CD8-positive, alpha-beta T cell (primary cell): ENCODE measurements at regions of chr1 and their contacts with region 1.

Region 1: GRCh38 chr1:157090196-157090647 is 9.4 kb downstream of the ETV3L start:
- DNase-seq: peak; percentile 75 to 94 (median 85)
- ATAC-seq: peak; percentile 78
- H3K4me3 ChIP-seq: no peak overlapping the region
- H3K4me3 Mint-ChIP-seq: no peak overlapping the region
- H3K27ac ChIP-seq: no peak overlapping the region
- H3K27ac Mint-ChIP-seq: no peak overlapping the region
- H3K4me1 ChIP-seq: peaks cover 5% of the 10 kb centered on the region
- H3K4me1 Mint-ChIP-seq: no peaks in the 10 kb centered on the region
- H3K27me3 ChIP-seq: no peaks in the 10 kb centered on the region
- H3K27me3 Mint-ChIP-seq: peaks cover 2% of the 10 kb centered on the region
- CTCF ChIP-seq: peak; percentile 87

Region 2: DNA sequence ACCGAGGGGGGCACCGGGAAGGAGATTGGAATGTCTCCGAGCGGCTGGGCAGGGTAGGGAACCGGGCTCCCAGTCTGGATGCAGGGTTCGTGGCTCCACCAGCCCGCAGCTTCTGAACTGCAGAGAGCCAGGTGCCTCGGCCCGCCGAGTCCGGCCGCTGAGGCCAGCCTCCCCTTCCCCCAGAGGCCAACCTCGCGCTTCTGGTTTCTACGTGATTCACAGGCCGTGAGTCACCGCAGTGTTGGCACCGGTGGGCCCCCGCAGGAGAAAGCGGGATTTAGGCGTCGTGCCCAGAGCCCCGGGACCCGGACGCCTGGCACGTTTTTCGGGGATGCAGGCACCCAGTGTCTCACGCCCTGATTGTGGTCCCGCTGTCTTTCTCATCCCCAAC is 385.3 kb before region 1 on chr1:
- CTCF ChIA-PET with region 1: no interaction called
- POLR2A ChIA-PET with region 1: no interaction called
- intact Hi-C with region 1: no loop called
- DNase-seq: peak in 4 of 9 experiments; percentile 23 to 45 (median 37)
- ATAC-seq: no peak
- H3K4me3 ChIP-seq: peak overlapping the region; percentile 52 to 89
- H3K4me3 Mint-ChIP-seq: peak overlapping the region; percentile 89
- H3K27ac ChIP-seq: no peak overlapping the region
- H3K27ac Mint-ChIP-seq: no peak overlapping the region
- H3K4me1 ChIP-seq: peaks cover 41% of the 10 kb centered on the region
- H3K4me1 Mint-ChIP-seq: peaks cover 37% of the 10 kb centered on the region
- H3K27me3 ChIP-seq: peaks cover 8 to 24% of the 10 kb centered on the region in 2 experiments
- H3K27me3 Mint-ChIP-seq: peaks cover 13% of the 10 kb centered on the region
- CTCF ChIP-seq: no peak

Region 3: DNA sequence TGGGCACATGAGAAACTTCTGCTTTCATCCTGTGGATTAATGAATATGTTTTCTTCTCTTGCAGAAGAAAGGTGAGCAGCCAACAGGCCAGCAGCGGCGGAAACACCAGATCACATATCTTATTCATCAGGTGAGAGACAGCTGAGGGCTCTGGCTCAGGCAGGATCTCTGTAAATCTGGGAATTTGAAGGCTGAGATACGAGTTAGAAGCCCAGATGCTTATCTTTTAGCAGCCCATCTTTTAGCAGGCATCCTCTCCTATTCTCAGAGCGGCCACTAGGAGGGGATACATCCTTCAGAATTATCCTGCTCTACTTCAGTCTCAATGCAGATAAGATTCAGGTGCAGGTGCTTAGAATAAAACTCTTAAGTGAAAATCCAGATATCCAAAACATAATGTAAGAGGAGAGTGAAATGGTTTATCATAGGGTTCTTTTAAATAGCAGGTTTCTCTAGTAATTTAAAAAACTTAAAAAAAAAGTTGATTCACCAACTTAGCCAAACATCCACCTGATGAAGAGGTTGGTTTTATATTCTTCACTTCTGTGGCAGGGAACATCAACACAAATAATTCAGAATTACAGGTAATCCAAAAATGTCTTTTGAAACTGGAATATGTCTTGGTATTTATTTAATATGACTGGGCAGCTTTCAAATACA is 292.9 kb before region 1 on chr1:
- CTCF ChIA-PET with region 1: no interaction called
- POLR2A ChIA-PET with region 1: no interaction called
- intact Hi-C with region 1: no loop called
- DNase-seq: peak in 7 of 9 experiments; percentile 48 to 84 (median 68)
- ATAC-seq: peak; percentile 91
- H3K4me3 ChIP-seq: no peak overlapping the region
- H3K4me3 Mint-ChIP-seq: no peak overlapping the region
- H3K27ac ChIP-seq: no peak overlapping the region
- H3K27ac Mint-ChIP-seq: no peak overlapping the region
- H3K4me1 ChIP-seq: no peaks in the 10 kb centered on the region
- H3K4me1 Mint-ChIP-seq: peaks cover 8% of the 10 kb centered on the region
- H3K27me3 ChIP-seq: no peaks in the 10 kb centered on the region
- H3K27me3 Mint-ChIP-seq: no peaks in the 10 kb centered on the region
- CTCF ChIP-seq: peak; percentile 87

Region 4: DNA sequence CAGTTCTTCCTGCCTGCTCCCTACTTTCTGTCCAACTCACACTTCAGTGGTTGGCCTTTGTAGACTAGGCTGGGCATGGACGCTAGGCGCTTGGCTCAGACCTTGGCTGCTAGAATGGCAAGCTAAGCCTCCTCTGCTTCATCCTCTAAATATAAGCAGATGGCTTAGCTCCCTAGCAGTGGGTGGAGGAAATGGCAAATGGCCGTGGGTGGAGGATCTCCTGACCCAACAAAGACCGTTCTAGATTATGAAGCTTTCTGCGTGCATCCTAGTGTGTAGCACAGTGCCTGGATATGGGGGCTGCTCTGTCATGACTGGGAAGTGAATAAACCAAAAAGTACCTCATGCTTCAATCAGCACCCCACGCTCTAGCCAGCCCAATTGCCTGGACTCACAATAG is 19.8 kb after region 1 on chr1:
- CTCF ChIA-PET with region 1: interaction called, 20 read pairs
- POLR2A ChIA-PET with region 1: no interaction called
- intact Hi-C with region 1: no loop called
- DNase-seq: no peak
- ATAC-seq: no peak
- H3K4me3 ChIP-seq: no peak overlapping the region
- H3K4me3 Mint-ChIP-seq: no peak overlapping the region
- H3K27ac ChIP-seq: no peak overlapping the region
- H3K27ac Mint-ChIP-seq: no peak overlapping the region
- H3K4me1 ChIP-seq: no peaks in the 10 kb centered on the region
- H3K4me1 Mint-ChIP-seq: no peaks in the 10 kb centered on the region
- H3K27me3 ChIP-seq: peaks cover 3 to 6% of the 10 kb centered on the region in 2 experiments
- H3K27me3 Mint-ChIP-seq: peaks cover 38% of the 10 kb centered on the region
- CTCF ChIP-seq: no peak

Region 5: GRCh38 chr1:157138220-157139051 is 48.2 kb after region 1 on chr1 and contains the start of gene ETV3:
- CTCF ChIA-PET with region 1: interaction called, 32 read pairs
- POLR2A ChIA-PET with region 1: no interaction called
- intact Hi-C with region 1: no loop called
- DNase-seq: peak; percentile 73 to 96 (median 87)
- ATAC-seq: peak; percentile 77
- H3K4me3 ChIP-seq: peak within 1 kb of the TSS; percentile 85 to 93
- H3K4me3 Mint-ChIP-seq: peak within 1 kb of the TSS; percentile 94
- H3K27ac ChIP-seq: peak within 1 kb of the TSS; percentile 84 to 97
- H3K27ac Mint-ChIP-seq: peak within 1 kb of the TSS; percentile 95
- H3K4me1 ChIP-seq: peaks cover 52% of the 10 kb centered on the region
- H3K4me1 Mint-ChIP-seq: peaks cover 54% of the 10 kb centered on the region
- H3K27me3 ChIP-seq: no peaks in the 10 kb centered on the region
- H3K27me3 Mint-ChIP-seq: no peaks in the 10 kb centered on the region
- CTCF ChIP-seq: no peak
- total RNA-seq, gene ETV3: 88.9 to 94.0 TPM

Region 6: GRCh38 chr1:157156058-157156541 is 65.9 kb after region 1 on chr1:
- CTCF ChIA-PET with region 1: interaction called, 582 read pairs
- POLR2A ChIA-PET with region 1: interaction called, 11 read pairs
- intact Hi-C with region 1: loop called in 1 of 2 experiments (anchors 1 kb)
- DNase-seq: peak; percentile 58 to 88 (median 77)
- ATAC-seq: peak; percentile 59
- H3K4me3 ChIP-seq: no peak overlapping the region
- H3K4me3 Mint-ChIP-seq: peak overlapping the region; percentile 46
- H3K27ac ChIP-seq: no peak overlapping the region
- H3K27ac Mint-ChIP-seq: peak overlapping the region; percentile 24
- H3K4me1 ChIP-seq: peaks cover 18% of the 10 kb centered on the region
- H3K4me1 Mint-ChIP-seq: peaks cover 17% of the 10 kb centered on the region
- H3K27me3 ChIP-seq: peaks cover 0 to 4% of the 10 kb centered on the region in 2 experiments
- H3K27me3 Mint-ChIP-seq: peaks cover 12% of the 10 kb centered on the region
- CTCF ChIP-seq: peak; percentile 92

Region 7: DNA sequence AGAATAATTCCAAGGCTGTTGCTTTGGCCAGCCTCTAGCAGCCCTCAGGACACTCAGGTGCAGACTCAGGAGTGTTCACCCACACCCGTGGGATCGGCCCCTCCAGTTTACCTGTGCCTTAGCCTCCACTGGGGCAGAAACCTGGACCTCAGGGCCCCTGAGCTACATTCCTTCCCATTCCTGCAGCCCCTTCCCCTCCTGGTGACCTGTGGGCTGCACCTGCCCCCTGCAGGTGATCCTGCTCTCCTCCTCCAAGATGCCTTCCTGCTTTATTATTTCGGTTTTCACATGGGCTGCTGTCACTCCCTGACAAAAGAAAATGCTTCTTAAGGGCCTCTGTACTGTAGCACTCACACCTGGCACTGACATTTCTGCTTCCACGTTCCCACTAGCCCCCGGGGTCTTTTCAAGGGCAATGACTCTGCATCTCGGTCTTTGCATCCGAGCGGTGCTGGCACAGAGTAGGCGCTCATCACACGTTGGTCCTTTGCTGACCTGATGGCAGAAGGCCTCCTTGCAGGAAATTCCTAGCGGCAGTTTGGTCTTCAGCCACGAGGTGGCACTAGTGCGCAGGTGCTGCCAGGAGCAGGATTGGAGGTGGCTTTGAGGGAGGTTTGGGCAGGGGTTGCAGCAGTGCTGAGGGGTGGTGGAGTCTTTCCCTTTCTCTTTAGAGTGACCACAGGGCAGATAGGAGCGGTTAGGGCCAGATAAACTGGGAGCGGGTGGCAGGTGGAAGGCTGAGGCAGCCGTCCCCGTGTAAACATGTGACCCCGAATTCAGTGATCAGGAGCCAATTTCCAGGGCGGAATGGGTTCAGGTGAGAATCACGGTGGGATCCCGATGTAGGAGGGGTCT is 73.3 kb after region 1 on chr1:
- CTCF ChIA-PET with region 1: interaction called, 582 read pairs
- POLR2A ChIA-PET with region 1: no interaction called
- intact Hi-C with region 1: no loop called
- DNase-seq: peak; percentile 57 to 83 (median 70)
- ATAC-seq: peak; percentile 76
- H3K4me3 ChIP-seq: no peak overlapping the region
- H3K4me3 Mint-ChIP-seq: no peak overlapping the region
- H3K27ac ChIP-seq: no peak overlapping the region
- H3K27ac Mint-ChIP-seq: no peak overlapping the region
- H3K4me1 ChIP-seq: no peaks in the 10 kb centered on the region
- H3K4me1 Mint-ChIP-seq: no peaks in the 10 kb centered on the region
- H3K27me3 ChIP-seq: peaks cover 3 to 7% of the 10 kb centered on the region in 2 experiments
- H3K27me3 Mint-ChIP-seq: peaks cover 6% of the 10 kb centered on the region
- CTCF ChIP-seq: peak; percentile 97

Region 8: GRCh38 chr1:157176591-157177121 is 86.4 kb after region 1 on chr1:
- CTCF ChIA-PET with region 1: interaction called, 10 read pairs
- POLR2A ChIA-PET with region 1: no interaction called
- intact Hi-C with region 1: no loop called
- DNase-seq: no peak
- ATAC-seq: no peak
- H3K4me3 ChIP-seq: no peak overlapping the region
- H3K4me3 Mint-ChIP-seq: no peak overlapping the region
- H3K27ac ChIP-seq: no peak overlapping the region
- H3K27ac Mint-ChIP-seq: no peak overlapping the region
- H3K4me1 ChIP-seq: no peaks in the 10 kb centered on the region
- H3K4me1 Mint-ChIP-seq: no peaks in the 10 kb centered on the region
- H3K27me3 ChIP-seq: no peaks in the 10 kb centered on the region
- H3K27me3 Mint-ChIP-seq: peaks cover 24% of the 10 kb centered on the region
- CTCF ChIP-seq: no peak

Region 9: DNA sequence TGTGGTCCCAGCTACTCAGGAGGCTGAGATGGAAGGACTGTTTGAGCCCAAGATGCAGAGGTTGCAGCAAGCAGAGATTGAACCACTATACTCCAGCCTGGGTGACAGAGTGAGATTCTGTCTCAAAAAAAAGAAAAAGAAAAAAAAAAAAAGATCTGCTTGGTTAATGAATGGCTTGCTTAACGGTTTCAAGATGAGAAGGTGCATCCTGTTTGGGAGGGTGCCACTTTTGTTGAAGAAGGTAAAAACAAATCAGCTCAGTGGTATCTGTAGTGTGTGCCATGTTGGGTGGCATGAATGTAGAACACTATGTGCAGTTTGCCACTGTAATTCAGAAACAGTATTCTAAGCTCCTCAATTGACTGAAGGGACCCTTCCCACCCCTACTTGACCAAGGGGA is 142.9 kb after region 1 on chr1:
- CTCF ChIA-PET with region 1: no interaction called
- POLR2A ChIA-PET with region 1: no interaction called
- intact Hi-C with region 1: no loop called
- DNase-seq: no peak
- ATAC-seq: no peak
- H3K4me3 ChIP-seq: no peak overlapping the region
- H3K4me3 Mint-ChIP-seq: no peak overlapping the region
- H3K27ac ChIP-seq: no peak overlapping the region
- H3K27ac Mint-ChIP-seq: no peak overlapping the region
- H3K4me1 ChIP-seq: no peaks in the 10 kb centered on the region
- H3K4me1 Mint-ChIP-seq: no peaks in the 10 kb centered on the region
- H3K27me3 ChIP-seq: no peaks in the 10 kb centered on the region
- H3K27me3 Mint-ChIP-seq: peaks cover 16% of the 10 kb centered on the region
- CTCF ChIP-seq: no peak

Region 10: DNA sequence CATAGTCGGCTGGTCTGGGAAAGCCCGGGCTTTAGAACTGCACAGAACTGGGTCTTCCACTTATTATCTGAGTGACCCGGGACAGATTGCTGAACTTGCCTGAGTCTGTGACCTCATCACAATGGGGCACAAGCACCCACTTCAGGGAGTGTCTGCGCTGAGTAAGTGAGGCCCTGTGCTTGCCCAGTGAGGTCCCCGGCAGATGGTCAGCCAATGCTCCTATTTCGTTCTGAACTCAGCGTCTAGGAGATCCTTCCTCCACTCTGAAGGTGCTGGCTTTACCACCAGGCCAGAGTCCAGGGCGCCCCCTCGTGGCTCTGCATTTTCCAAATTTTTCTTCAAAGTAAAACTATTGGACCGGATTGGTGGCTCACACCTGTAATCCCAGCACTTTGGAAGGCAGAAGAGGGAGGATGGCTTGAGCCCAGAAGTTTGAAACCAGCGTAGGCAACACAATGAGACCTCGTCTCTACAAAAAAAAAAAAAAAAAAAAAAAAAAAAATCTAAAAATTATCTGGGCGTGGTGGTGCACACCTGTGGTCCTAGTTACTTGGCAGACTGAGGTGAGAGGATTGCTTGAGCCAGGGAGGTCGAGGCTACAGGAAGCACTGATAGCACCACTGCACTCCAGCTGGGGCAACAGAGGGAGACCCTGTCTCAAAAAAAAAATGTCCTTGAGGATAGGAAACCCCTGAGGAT is 400.4 kb after region 1 on chr1:
- CTCF ChIA-PET with region 1: no interaction called
- POLR2A ChIA-PET with region 1: no interaction called
- intact Hi-C with region 1: loop called in 1 of 2 experiments (anchors 10 kb)
- DNase-seq: peak in 6 of 9 experiments; percentile 6 to 54 (median 44)
- ATAC-seq: no peak
- H3K4me3 ChIP-seq: no peak overlapping the region
- H3K4me3 Mint-ChIP-seq: no peak overlapping the region
- H3K27ac ChIP-seq: no peak overlapping the region
- H3K27ac Mint-ChIP-seq: no peak overlapping the region
- H3K4me1 ChIP-seq: no peaks in the 10 kb centered on the region
- H3K4me1 Mint-ChIP-seq: no peaks in the 10 kb centered on the region
- H3K27me3 ChIP-seq: no peaks in the 10 kb centered on the region
- H3K27me3 Mint-ChIP-seq: peaks cover 24% of the 10 kb centered on the region
- CTCF ChIP-seq: peak; percentile 40